ENCODE measurements at regions of chr12 and their contacts with region 1.

Region 1: GRCh38 chr12:28708918-28709371 is 440.1 kb upstream of the FAR2 start:
- DNase-seq: peak; percentile 61
- ATAC-seq: peak; percentile 44
- H3K4me3 ChIP-seq: no peak overlapping the region
- H3K27ac ChIP-seq: no peak overlapping the region
- H3K4me1 ChIP-seq: peaks cover 2% of the 10 kb centered on the region; the same call in 1 of the 2 replicates
- H3K27me3 ChIP-seq: no peaks in the 10 kb centered on the region
- CTCF ChIP-seq: no peak
- POLR2A ChIP-seq: no peak
- RAD21 ChIP-seq: no peak

Region 2: GRCh38 chr12:28645891-28646290 is 63.1 kb before region 1 on chr12:
- CTCF ChIA-PET with region 1: no interaction called
- POLR2A ChIA-PET with region 1: no interaction called
- dilution Hi-C with region 1: no loop called
- in situ Hi-C with region 1: loop called (anchors 10 kb)
- intact Hi-C with region 1: no loop called
- DNase-seq: no peak
- ATAC-seq: no peak
- H3K4me3 ChIP-seq: no peak overlapping the region
- H3K27ac ChIP-seq: no peak overlapping the region
- H3K4me1 ChIP-seq: no peaks in the 10 kb centered on the region
- H3K27me3 ChIP-seq: no peaks in the 10 kb centered on the region
- CTCF ChIP-seq: no peak
- POLR2A ChIP-seq: no peak
- RAD21 ChIP-seq: no peak

Region 3: GRCh38 chr12:28750946-28751685 is 42.2 kb after region 1 on chr12:
- CTCF ChIA-PET with region 1: no interaction called
- POLR2A ChIA-PET with region 1: no interaction called
- dilution Hi-C with region 1: no loop called
- in situ Hi-C with region 1: no loop called
- intact Hi-C with region 1: no loop called
- DNase-seq: peak; percentile 8
- ATAC-seq: 0 out of 2 replicates have a peak, but pooled peaks have one; percentile 17
- H3K4me3 ChIP-seq: no peak overlapping the region
- H3K27ac ChIP-seq: no peak overlapping the region
- H3K4me1 ChIP-seq: peaks cover 1% of the 10 kb centered on the region; the same call in 1 of the 2 replicates
- H3K27me3 ChIP-seq: no peaks in the 10 kb centered on the region
- CTCF ChIP-seq: no peak
- POLR2A ChIP-seq: no peak
- RAD21 ChIP-seq: no peak

Region 4: GRCh38 chr12:28883406-28883997 is 174.6 kb after region 1 on chr12:
- CTCF ChIA-PET with region 1: interaction called, 12 read pairs
- POLR2A ChIA-PET with region 1: no interaction called
- dilution Hi-C with region 1: no loop called
- in situ Hi-C with region 1: no loop called
- intact Hi-C with region 1: no loop called
- DNase-seq: peak; percentile 27
- ATAC-seq: no peak
- H3K4me3 ChIP-seq: no peak overlapping the region
- H3K27ac ChIP-seq: no peak overlapping the region
- H3K4me1 ChIP-seq: no peaks in the 10 kb centered on the region; the same call in 1 of the 2 replicates
- H3K27me3 ChIP-seq: no peaks in the 10 kb centered on the region
- CTCF ChIP-seq: no peak
- POLR2A ChIP-seq: no peak
- RAD21 ChIP-seq: no peak